ENCODE measurements at regions of chr4 and their contacts with region 1.

Region 1: GRCh38 chr4:113979148-113979904 is at the start of gene ARSJ:
- DNase-seq: peak; percentile 82
- H3K4me3 ChIP-seq: peak within 1 kb of the TSS; percentile 58 to 97 (median 90)
- H3K27ac ChIP-seq: peak within 1 kb of the TSS; percentile 94
- H3K4me1 ChIP-seq: peaks cover 14% of the 10 kb centered on the region
- H3K27me3 ChIP-seq: no peaks in the 10 kb centered on the region
- CTCF ChIP-seq: no peak
- total RNA-seq, gene ARSJ: 35.8 to 39.8 TPM

Region 2: DNA sequence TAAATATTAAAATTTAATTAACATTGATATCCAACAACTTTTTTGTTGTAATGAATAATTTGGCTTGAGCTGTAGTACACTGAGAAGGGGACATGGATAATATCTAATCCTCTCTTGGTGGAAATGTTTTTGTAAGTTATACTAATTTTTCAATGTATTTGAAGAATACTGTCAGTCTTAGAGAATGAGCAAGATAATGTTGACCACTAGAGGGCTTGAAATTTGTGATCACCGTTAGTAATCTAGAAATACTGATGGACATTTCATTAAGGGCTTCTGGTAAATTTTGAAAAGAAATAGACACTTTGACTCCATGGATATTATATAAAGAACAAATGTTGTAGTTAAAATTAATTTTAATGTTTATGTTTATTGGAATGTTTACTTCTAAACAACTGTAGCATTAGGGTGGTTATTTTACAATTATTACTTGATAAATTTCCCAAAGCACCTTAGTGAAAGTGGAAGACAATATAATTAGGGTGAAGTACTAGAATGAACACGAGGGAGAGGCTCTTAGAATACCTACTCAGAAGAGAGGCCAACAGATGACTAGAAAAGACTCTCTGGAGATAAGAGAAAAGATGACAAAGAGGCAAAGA is 197.8 kb before region 1 on chr4:
- CTCF ChIA-PET with region 1: no interaction called
- dilution Hi-C with region 1: no loop called
- in situ Hi-C with region 1: no loop called
- intact Hi-C with region 1: loop called (anchors 2 kb)
- DNase-seq: no peak
- H3K4me3 ChIP-seq: no peak overlapping the region
- H3K27ac ChIP-seq: no peak overlapping the region
- H3K4me1 ChIP-seq: peaks cover 15% of the 10 kb centered on the region
- H3K27me3 ChIP-seq: no peaks in the 10 kb centered on the region
- CTCF ChIP-seq: peak; percentile 66 to 83

Region 3: GRCh38 chr4:114005569-114006442 is 26.5 kb after region 1 on chr4:
- CTCF ChIA-PET with region 1: no interaction called
- dilution Hi-C with region 1: no loop called
- in situ Hi-C with region 1: no loop called
- intact Hi-C with region 1: loop called (anchors 1 kb)
- DNase-seq: peak; percentile 54
- H3K4me3 ChIP-seq: no peak overlapping the region
- H3K27ac ChIP-seq: no peak overlapping the region
- H3K4me1 ChIP-seq: peaks cover 17% of the 10 kb centered on the region
- H3K27me3 ChIP-seq: no peaks in the 10 kb centered on the region
- CTCF ChIP-seq: no peak

Region 4: GRCh38 chr4:114040319-114041116 is 61.2 kb after region 1 on chr4:
- CTCF ChIA-PET with region 1: no interaction called
- dilution Hi-C with region 1: no loop called
- in situ Hi-C with region 1: no loop called
- intact Hi-C with region 1: loop called (anchors 5 kb)
- DNase-seq: peak; percentile 84
- H3K4me3 ChIP-seq: no peak overlapping the region
- H3K27ac ChIP-seq: no peak overlapping the region
- H3K4me1 ChIP-seq: no peaks in the 10 kb centered on the region
- H3K27me3 ChIP-seq: no peaks in the 10 kb centered on the region
- CTCF ChIP-seq: no peak

Region 5: DNA sequence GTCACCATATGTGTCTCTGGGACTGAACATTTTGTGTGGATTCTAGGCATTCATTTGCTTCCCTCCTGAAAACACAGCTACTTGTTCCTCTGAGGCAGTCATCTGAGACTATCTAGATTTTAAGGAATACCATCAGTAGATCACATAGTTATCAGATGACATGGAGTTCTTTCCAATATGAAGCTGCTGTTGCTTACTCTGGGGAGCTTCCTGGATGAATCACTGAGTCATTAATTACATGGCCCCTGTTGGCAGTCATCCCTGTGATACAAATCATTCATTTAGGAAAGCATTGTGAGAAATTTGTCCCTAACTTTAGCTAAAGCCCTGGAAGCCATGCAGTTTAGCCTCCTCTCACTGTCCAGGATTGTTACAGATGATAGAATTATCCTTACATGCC is 98.3 kb after region 1 on chr4:
- CTCF ChIA-PET with region 1: no interaction called
- dilution Hi-C with region 1: no loop called
- in situ Hi-C with region 1: loop called in 1 of 2 experiments (anchors 10 kb)
- intact Hi-C with region 1: loop called (anchors 5 kb)
- DNase-seq: peak; percentile 73
- H3K4me3 ChIP-seq: no peak overlapping the region
- H3K27ac ChIP-seq: peak overlapping the region; percentile 19
- H3K4me1 ChIP-seq: peaks cover 13% of the 10 kb centered on the region
- H3K27me3 ChIP-seq: no peaks in the 10 kb centered on the region
- CTCF ChIP-seq: no peak

Region 6: DNA sequence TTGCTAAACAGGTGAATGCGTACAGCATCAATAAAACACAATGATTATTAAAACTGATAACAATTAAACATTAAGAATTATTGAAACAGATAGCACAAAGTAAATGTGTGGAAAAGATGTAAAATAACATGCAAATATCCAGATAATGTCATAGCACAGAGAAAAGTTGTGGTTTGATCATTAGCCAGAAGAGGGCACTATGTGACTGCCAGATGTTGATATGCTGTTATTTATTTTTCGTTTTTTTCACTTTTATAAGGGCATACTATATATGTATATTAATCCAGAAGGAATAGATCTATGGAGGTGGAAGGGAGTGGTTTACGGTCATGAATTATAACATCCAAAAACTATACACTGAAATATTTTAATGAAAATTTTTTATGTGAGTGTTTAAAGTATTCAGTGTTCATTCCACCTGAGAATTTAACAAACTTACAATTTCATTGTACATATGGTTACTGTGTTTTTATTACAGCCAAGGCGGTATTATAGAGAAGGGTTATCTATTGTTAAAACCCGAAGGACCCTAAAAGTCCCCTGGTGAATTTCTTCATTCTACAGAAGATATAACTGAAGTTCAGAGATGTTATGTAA is 407.4 kb after region 1 on chr4:
- CTCF ChIA-PET with region 1: no interaction called
- dilution Hi-C with region 1: no loop called
- in situ Hi-C with region 1: no loop called
- intact Hi-C with region 1: loop called (anchors 1 kb)
- DNase-seq: no peak
- H3K4me3 ChIP-seq: no peak overlapping the region
- H3K27ac ChIP-seq: no peak overlapping the region
- H3K4me1 ChIP-seq: peaks cover 18% of the 10 kb centered on the region
- H3K27me3 ChIP-seq: no peaks in the 10 kb centered on the region
- CTCF ChIP-seq: peak; percentile 68 to 73